ENCODE measurements at regions of chr2 and their contacts with region 1.

Region 1: DNA sequence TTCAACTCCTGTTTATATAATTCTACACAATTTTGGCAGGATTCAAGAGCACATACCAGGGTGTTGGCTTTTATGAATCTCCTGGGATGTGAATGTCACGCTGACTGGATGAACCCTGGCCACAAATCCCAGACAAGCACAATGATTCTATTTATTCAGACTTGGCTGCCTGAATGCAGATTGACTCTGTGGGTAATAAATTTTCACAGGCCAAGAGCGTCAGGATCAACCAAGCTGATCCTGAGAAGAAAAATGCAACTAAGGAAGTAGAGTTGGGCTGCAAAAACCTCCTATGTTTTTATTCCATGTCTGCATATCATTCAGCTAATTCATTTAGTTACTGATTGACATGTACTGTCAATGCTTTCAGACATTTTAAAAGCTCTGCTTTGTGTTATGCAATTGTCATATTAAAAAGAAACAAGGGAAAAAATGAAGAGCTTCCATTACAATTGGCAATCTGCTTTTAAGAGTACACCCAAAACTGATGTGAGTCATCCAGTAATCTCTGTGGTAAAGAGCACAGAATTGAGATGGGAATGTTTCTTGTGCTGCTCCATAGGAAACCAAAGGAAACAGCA is 173.0 kb upstream of the REV1 start:
- DNase-seq: peak in 2 of 10 donors; percentile 11 to 17
- H3K4me3 ChIP-seq: no peak overlapping the region
- H3K27ac ChIP-seq: peak overlapping the region in 26 of 59 donors; percentile 1 to 69 (median 18)
- H3K27me3 ChIP-seq: no peaks in the 10 kb centered on the region
- CTCF ChIP-seq: no peak

Region 2: DNA sequence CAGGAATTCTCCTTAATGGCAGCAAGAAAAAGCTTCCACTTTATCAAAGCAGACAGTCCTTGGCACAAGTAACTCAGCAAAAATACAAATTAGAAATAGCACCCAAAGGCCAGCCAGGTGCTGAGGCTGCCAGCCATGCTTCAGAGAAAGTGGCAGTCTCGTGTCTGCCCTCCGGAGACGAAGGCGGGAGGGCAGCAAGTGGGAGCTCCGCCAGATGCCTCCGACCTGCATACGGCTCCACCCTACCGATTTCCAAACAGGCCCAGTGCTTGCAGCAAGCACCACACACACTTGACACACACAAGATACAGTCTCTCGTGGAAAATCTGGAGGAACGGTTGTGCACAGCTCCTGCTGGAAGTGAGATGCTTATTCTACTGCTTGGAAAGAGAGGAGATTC is 38.2 kb before region 1 on chr2:
- intact Hi-C with region 1: loop called in 1 of 2 experiments (anchors 5 kb)
- DNase-seq: peak in 1 of 10 donors; percentile 23
- H3K4me3 ChIP-seq: no peak overlapping the region
- H3K27ac ChIP-seq: no peak overlapping the region
- H3K27me3 ChIP-seq: no peaks in the 10 kb centered on the region
- CTCF ChIP-seq: no peak